ENCODE measurements at regions of chr12 and their contacts with region 1.

Region 1: DNA sequence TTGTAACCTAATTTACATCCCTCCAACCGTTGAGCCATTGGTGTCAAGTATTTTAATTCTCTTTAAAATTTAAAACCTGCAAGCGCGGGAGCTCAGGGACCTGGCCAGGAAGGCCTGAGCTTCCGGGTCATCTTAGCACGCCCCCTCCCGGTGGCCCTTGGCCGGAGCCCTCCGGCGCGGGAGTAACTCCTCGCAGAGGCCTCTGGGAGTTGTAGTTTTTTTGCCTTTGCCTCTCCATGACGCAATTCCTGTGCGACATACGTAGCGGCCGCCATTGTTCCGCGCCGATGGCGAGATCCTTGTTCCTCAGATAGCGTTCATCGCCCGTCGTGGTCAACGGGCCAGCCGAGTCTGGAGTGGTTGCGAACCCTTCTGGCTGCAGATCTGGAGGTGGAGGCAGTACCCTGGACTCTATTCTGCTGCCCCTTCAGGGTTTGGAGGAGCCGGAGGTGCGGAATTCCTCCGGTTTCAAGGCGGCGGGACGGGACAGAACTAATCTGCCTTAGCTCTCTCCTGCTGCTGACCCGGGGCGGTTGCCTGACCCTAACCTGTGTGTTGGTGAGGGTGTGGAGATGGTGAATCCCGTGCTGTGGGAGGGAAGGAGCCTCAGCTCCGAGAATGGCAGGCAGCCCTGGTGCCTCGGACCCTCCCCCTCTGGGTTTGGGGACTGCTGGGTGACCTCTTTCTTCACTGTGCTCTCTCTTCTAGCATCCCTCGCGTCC is at the start of gene ZNF268:
- DNase-seq: peak; percentile 92 to 95 (median 94)
- ATAC-seq: peak; percentile 94 to 99 (median 98)
- H3K4me3 ChIP-seq: peak within 1 kb of the TSS; percentile 63 to 97 (median 87)
- H3K27ac ChIP-seq: peak within 1 kb of the TSS in 11 of 12 donors; percentile 45 to 83 (median 70)
- H3K4me1 ChIP-seq: peaks cover 0 to 12% (median 7%) of the 10 kb centered on the region in 12 donors
- H3K27me3 ChIP-seq: no peaks in the 10 kb centered on the region
- CTCF ChIP-seq: peak; percentile 69 to 96 (median 88)
- POLR2A ChIP-seq: peak in 1 of 2 donors; percentile 49
- total RNA-seq, gene ZNF268: 8.1 to 15.5 (median 10.0) TPM

Region 2: GRCh38 chr12:132986001-132986912 is 195.1 kb before region 1 on chr12 and contains the start of gene ZNF26:
- intact Hi-C with region 1: loop called in 4 of 10 experiments (anchors 1 kb)
- DNase-seq: peak; percentile 92 to 95 (median 93)
- ATAC-seq: peak; percentile 99 to 100 (median 100)
- H3K4me3 ChIP-seq: peak within 1 kb of the TSS; percentile 62 to 97 (median 82)
- H3K27ac ChIP-seq: peak within 1 kb of the TSS; percentile 53 to 91 (median 84)
- H3K4me1 ChIP-seq: peaks cover 6 to 18% (median 12%) of the 10 kb centered on the region in 12 donors
- H3K27me3 ChIP-seq: no peaks in the 10 kb centered on the region
- CTCF ChIP-seq: no peak
- POLR2A ChIP-seq: peak in 1 of 2 donors; percentile 71
- total RNA-seq, gene ZNF26: 0.60 to 6.7 (median 3.7) TPM

Region 3: DNA sequence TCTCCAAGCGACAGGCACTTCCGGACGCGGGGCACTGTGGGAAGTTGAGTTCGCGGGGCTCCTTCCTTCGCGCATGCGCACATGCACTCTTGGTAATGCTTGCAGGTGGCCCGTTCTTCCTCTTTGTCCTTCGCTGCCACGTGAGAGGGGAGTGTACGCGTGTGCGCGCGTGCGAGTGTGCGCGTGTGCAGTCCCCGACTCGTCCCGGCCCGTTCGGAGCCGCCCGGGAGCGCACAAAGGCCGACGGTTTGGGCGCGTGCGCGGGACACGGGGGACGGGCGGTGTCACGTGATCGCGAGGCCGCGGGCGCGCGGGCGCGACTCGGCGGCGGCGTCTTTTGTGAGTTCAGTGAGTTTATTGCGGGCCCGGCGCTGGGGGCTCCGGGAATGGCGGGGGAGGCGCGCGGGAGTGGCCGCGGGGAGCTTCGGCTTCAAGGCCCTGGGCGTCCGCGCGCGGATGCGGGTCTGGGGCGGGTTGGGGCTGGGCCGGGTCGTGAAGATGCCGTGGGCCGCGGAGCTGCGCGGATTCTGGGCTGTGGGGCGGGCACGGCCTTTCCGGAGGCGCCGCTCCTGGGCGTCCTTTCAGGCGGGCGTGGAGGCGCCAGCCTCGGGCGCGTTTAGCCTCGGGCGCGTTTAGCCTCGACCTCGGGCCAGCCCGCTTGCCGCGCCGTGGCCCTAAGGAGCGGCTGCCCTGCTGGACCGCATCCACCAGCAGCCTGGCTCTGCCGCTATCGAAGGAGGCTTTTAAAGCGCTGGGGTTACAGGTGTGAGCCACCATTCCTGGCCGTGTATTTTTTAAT is 144.0 kb before region 1 on chr12 and contains the start of gene ZNF84:
- intact Hi-C with region 1: loop called in 1 of 10 experiments (anchors 1 kb)
- DNase-seq: peak; percentile 96 to 98 (median 98)
- ATAC-seq: peak; percentile 99 to 100 (median 99)
- H3K4me3 ChIP-seq: peak within 1 kb of the TSS; percentile 60 to 86 (median 78)
- H3K27ac ChIP-seq: peak within 1 kb of the TSS; percentile 79 to 97 (median 92)
- H3K4me1 ChIP-seq: peaks cover 0 to 21% (median 7%) of the 10 kb centered on the region in 12 donors
- H3K27me3 ChIP-seq: no peaks in the 10 kb centered on the region
- CTCF ChIP-seq: no peak
- POLR2A ChIP-seq: peak in 1 of 2 donors; percentile 57
- total RNA-seq, gene ZNF84: 11.0 to 24.0 (median 15.9) TPM

Region 4: DNA sequence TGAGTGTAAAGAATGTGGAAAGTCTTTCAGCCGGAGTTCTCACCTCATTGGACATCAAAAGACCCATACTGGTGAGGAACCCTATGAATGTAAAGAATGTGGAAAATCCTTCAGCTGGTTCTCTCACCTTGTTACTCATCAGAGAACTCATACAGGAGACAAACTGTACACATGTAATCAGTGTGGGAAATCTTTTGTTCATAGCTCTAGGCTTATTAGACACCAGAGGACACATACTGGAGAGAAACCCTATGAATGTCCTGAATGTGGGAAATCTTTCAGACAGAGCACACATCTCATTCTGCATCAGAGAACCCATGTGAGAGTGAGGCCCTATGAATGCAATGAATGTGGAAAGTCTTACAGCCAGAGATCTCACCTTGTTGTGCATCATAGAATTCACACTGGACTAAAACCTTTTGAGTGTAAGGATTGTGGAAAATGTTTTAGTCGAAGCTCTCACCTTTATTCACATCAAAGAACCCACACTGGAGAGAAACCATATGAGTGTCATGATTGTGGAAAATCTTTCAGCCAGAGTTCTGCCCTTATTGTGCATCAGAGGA is 25.2 kb before region 1 on chr12:
- intact Hi-C with region 1: no loop called
- DNase-seq: no peak
- ATAC-seq: no peak
- H3K4me3 ChIP-seq: no peak overlapping the region
- H3K27ac ChIP-seq: no peak overlapping the region
- H3K4me1 ChIP-seq: no peaks in the 10 kb centered on the region
- H3K27me3 ChIP-seq: no peaks in the 10 kb centered on the region
- CTCF ChIP-seq: no peak
- POLR2A ChIP-seq: no peak

Measured in heart left ventricle (tissue), 16 donors.